ENCODE measurements at regions of chr7 and their contacts with region 1.

Region 1: DNA sequence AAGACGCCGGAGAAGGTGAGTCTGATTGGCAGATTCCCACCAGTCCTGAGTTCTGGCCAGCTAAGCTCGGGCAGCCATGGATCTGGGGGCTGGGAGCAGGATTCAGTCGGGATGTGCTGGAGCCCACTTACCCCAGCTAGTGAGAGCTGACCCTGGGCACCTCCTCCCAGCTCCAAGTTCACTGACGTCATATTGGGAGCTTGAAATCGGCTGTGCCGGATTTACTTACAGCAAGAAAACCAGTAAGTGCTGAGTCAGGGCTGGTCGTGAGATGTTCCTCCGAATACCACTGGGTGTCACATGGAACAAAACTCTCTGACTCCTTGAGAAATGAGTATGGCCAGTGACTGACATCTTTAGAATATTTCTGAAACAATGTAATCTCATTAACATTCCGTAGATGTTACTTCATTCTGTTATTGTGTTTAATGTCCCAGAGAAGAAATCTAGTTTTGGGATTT is 621.2 kb downstream of the SDK1 start:
- DNase-seq: peak; percentile 67
- H3K4me3 Mint-ChIP-seq: no peak overlapping the region
- H3K27ac Mint-ChIP-seq: no peak overlapping the region
- H3K4me1 Mint-ChIP-seq: peaks cover 14% of the 10 kb centered on the region
- H3K27me3 Mint-ChIP-seq: no peaks in the 10 kb centered on the region
- CTCF ChIP-seq: peak; percentile 44

Region 2: DNA sequence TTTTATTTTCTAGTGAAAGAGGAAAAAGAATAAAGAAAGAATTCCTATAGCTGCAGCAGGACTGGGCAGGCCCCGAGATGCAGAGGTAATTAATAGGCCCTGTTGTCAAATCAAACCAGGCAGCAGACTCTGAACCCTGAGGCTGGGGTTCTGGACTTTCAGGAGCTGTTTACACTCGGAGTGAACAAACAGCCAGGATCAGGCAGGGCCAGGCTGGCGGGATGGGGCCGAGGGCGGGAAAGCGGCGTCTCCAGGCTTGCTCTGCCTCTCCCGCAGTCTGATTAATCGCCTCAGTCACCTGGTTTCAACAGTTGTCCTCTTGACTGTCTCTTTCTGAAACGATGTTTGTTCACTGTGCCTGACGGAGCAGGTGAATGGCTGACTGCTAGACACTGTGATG is 84.5 kb after region 1 on chr7:
- CTCF ChIA-PET with region 1: no interaction called
- intact Hi-C with region 1: no loop called
- DNase-seq: no peak
- H3K4me3 Mint-ChIP-seq: no peak overlapping the region
- H3K27ac Mint-ChIP-seq: no peak overlapping the region
- H3K4me1 Mint-ChIP-seq: no peaks in the 10 kb centered on the region
- H3K27me3 Mint-ChIP-seq: no peaks in the 10 kb centered on the region
- CTCF ChIP-seq: no peak

Region 3: GRCh38 chr7:4631664-4632171 is 709.5 kb after region 1 on chr7:
- CTCF ChIA-PET with region 1: no interaction called
- intact Hi-C with region 1: loop called (anchors 10 kb)
- DNase-seq: peak; percentile 87
- H3K4me3 Mint-ChIP-seq: peak overlapping the region; percentile 64
- H3K27ac Mint-ChIP-seq: peak overlapping the region; percentile 57
- H3K4me1 Mint-ChIP-seq: peaks cover 11% of the 10 kb centered on the region
- H3K27me3 Mint-ChIP-seq: peaks cover 16% of the 10 kb centered on the region
- CTCF ChIP-seq: peak; percentile 67

Measured in Calu3 (cell line).